HepG2 (cell line): ENCODE measurements at regions of chr14 and their contacts with region 1.

Region 1: DNA sequence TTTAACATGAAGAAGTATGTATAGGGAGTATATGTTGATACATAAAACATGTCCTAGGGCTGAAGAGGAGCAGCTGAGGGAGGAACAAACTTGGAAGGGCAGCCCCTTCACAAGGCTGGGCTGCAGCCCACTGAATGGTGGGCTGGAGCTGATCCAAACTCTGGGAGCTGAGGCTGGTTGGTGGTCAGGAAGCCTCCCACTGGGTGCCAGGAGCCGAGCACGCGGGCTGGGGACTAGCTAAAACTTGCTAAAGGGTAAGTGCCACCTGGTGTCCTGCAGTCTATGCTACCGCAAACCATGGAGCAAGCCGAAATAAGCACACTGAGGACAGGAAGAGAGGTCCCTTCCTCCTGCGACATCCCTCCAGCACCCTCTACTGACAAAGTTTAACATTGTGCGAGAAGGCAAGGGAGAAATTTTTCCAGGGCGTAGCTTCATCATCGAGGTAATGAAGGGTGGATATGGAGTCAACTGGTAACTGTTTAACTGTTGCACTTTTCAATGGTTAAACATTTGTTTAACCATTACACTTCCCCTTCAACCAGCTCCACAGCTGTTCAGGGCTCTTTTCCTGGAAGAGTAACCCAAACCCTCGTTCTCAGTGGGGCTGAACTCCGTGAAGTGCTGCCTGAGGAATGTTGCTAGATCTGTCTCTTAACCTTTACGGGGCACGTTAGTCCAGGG is 42.2 kb downstream of the EGLN3 start:
- DNase-seq: peak; percentile 50
- ATAC-seq: peak; percentile 64
- H3K4me3 ChIP-seq: peak overlapping the region in 1 of 3 experiments; percentile 0; a peak in 1 of 6 replicates
- H3K27ac ChIP-seq: peak overlapping the region; percentile 10
- H3K4me1 ChIP-seq: peaks cover 54% of the 10 kb centered on the region
- H3K27me3 ChIP-seq: no peaks in the 10 kb centered on the region
- CTCF ChIP-seq: peak; percentile 83
- EP300 ChIP-seq: 0 out of 4 replicates have a peak, but pooled peaks of 1 of the 2 experiments have one; percentile 5
- POLR2A ChIP-seq: no peak
- RAD21 ChIP-seq: no peak

Region 2: DNA sequence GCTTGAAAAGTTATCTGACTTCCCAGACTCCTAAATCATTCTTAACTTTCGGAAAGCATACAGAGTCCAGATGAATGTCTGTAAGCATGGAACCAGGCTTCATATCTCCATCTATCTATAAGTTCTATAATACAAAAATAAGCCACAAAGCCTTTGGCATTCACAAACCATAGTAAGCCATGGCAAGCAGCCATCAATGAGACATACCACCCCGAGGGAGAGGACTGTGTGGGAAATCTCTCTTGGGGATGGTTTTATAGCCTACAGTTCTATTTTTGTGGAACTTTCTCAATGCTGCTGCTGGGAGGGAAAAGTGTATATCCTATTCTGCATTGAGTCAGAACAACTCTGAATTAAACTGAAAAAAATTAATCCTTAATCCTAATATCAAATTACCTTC is 21.8 kb after region 1 on chr14:
- CTCF ChIA-PET with region 1: no interaction called
- POLR2A ChIA-PET with region 1: no interaction called
- in situ Hi-C with region 1: no loop called
- intact Hi-C with region 1: no loop called
- DNase-seq: no peak
- ATAC-seq: no peak
- H3K4me3 ChIP-seq: no peak overlapping the region
- H3K27ac ChIP-seq: no peak overlapping the region
- H3K4me1 ChIP-seq: peaks cover 8% of the 10 kb centered on the region; the same call in 1 of the 2 replicates
- H3K27me3 ChIP-seq: no peaks in the 10 kb centered on the region
- CTCF ChIP-seq: no peak
- EP300 ChIP-seq: no peak
- POLR2A ChIP-seq: no peak
- RAD21 ChIP-seq: no peak

Region 3: DNA sequence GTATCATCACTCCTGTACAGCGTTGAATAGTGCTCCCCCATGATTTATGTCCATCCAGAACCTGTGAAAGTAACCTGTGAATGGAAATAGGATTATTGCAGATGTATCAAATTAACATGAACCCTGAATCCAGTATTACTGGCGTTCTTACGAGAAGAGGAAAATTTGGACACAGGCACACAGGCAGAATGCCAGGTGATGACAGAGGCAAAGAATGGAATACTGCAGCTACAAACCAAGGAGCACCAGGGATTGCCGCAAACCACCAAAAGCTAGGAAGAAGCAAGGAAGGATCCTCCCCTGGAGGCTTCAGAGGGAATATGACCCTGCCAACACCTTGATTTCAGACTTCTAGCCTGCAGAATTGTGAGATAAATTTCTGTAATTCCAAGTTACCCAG is 155.7 kb after region 1 on chr14:
- CTCF ChIA-PET with region 1: no interaction called
- POLR2A ChIA-PET with region 1: no interaction called
- in situ Hi-C with region 1: no loop called
- intact Hi-C with region 1: no loop called
- DNase-seq: no peak
- ATAC-seq: no peak
- H3K4me3 ChIP-seq: no peak overlapping the region
- H3K27ac ChIP-seq: no peak overlapping the region
- H3K4me1 ChIP-seq: peaks cover 37% of the 10 kb centered on the region
- H3K27me3 ChIP-seq: peaks cover 0 to 20% of the 10 kb centered on the region in 2 experiments; a peak in 1 of 5 replicates
- CTCF ChIP-seq: no peak
- EP300 ChIP-seq: no peak
- POLR2A ChIP-seq: no peak
- RAD21 ChIP-seq: no peak

Region 4: GRCh38 chr14:35897616-35898111 is 1989.0 kb after region 1 on chr14:
- CTCF ChIA-PET with region 1: no interaction called
- POLR2A ChIA-PET with region 1: no interaction called
- in situ Hi-C with region 1: no loop called
- intact Hi-C with region 1: loop called (anchors 5 kb)
- DNase-seq: peak; percentile 50
- ATAC-seq: peak; percentile 93
- H3K4me3 ChIP-seq: no peak overlapping the region
- H3K27ac ChIP-seq: no peak overlapping the region
- H3K4me1 ChIP-seq: no peaks in the 10 kb centered on the region
- H3K27me3 ChIP-seq: no peaks in the 10 kb centered on the region
- CTCF ChIP-seq: no peak
- EP300 ChIP-seq: no peak
- POLR2A ChIP-seq: no peak
- RAD21 ChIP-seq: no peak